ENCODE measurements at regions of chr7 and their contacts with region 1.

Region 1: DNA sequence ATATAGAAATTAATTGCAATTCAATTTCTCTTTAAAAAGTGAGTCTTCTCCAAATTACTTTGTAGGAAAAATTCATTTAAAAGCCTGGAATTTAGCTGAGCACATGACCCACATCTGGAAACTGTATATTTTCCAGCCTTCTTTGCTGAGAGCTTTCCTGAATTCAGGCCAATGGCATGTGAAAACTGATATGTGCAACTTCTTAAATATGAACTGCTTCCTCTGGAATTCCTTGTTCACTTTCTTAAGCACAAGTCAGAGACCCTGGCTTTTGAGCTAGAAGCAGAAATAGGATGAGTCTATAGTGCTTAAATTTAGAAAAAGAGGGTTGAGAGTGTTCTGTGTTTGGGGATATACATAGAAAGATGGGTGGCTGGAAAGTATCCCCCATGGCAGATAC is 365.1 kb upstream of the MTPN start:
- DNase-seq: no peak

Region 2: DNA sequence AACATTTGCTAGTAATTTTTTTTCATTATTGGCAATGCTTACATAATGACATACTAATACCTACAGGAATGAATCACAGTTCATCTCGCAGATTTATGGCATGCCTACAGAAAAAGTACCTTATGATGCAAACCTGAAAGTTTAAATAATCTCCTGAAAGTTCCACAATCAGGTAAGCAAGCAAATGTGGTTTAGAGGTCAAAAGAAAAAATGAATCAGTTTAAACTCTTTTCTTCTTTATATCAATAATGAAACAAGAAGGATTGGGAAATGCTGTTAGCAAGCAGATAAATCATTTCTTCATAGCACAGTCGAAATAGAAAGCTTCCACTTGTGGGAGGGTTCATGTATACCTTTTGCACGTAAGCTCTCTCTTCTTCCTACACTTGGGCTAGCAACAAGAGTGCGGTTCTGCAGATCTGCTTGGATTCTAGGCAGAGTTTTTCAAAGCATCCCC is 311.4 kb before region 1 on chr7:
- intact Hi-C with region 1: loop called (anchors 10 kb)
- DNase-seq: no peak

Region 3: DNA sequence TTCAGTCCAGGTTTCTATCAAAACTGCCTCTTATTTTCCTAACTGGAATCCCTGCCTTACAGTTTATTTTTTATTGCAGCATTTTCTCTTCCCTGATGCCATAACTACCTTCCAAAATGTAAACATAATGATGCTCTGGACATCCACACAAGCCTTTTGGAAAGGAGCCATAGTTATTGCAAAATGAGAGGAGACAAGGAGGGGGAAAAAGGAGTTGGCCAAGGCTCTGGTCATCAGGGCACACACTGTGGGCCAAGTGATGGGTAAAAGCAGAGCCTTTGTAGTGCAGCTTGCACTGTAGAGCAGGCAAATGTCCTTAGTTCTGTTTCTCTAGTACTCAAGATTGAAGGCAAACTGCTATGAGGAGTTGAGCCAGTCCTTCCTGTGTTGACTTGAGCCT is 75.8 kb before region 1 on chr7:
- intact Hi-C with region 1: no loop called
- DNase-seq: no peak

Region 4: DNA sequence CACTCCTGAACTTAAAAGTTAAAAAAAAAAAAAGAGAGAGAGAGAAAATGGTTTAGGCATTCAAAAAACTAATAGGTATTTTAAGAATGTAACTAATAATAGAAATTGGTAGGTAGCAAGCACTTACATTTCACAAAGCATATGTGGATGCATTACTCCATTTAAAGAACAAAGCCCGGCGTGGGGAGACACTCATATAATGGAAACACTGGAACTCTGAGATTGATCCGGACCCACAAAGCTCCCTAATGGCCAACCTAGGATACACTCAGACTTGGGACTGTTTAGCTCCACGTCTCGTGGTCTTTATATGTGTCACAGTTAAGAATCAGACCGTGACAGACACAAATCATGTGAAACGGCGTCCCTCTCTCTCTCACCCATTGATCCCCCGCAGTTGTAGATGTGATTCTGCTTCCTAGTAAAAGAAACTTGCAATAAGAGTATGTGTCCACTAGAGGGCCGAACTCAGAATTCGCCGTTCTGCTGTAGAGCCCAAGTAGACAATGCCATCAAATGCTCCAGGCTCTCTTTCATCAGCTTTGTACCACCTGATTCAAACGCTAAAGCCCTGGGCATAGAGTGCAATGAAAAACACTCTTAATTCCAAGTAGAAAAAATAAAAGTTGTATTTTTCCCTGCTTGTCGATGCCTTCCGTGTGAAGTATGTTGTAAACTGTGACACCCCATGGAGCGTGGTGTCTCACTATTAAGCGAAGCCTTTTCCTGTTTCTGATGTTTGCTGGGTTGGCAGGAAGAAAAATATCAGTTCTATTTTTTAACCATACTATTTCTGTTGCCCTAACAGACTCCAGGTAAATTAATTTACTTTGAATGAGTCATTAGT is 63.9 kb after region 1 on chr7:
- intact Hi-C with region 1: no loop called
- DNase-seq: no peak